Left colon (tissue), 2 donors: ENCODE measurements at regions of chr17 and their contacts with region 1.

Region 1: GRCh38 chr17:40909351-40909750 is 24.3 kb upstream of the KRT20 start:
- DNase-seq: peak; percentile 56 to 78
- ATAC-seq: peak; percentile 78

Region 2: DNA sequence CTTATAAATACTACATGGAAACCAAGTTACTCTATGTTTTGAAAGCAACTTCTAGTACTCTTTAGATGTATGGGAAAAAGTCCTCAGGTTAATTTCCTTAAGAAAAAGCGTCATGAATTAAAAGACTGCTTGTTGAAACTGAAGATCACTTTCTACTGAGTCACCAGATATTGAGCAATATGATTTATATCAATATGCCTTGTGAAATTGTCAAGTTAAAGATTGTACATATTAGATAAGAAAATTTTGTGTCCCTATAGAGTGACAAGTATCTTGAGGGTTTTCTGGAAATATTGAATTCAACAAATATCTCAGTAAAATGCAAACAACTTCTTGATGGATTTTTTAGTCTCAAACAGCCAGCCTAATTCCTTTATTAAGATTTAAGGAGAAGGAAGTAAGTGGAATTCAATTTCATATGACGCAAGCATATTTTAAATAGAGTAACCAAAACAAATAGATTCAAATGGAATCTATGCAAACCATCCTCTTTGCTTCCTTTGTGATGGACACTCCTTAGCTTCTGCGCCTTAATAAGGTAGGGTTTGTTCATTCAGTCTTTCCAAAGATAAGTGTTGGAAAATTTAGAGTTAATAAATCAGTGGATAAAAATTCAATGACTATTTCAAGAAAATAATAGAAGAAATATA is 58.9 kb before region 1 on chr17:
- intact Hi-C with region 1: no loop called
- DNase-seq: no peak
- ATAC-seq: no peak

Region 3: DNA sequence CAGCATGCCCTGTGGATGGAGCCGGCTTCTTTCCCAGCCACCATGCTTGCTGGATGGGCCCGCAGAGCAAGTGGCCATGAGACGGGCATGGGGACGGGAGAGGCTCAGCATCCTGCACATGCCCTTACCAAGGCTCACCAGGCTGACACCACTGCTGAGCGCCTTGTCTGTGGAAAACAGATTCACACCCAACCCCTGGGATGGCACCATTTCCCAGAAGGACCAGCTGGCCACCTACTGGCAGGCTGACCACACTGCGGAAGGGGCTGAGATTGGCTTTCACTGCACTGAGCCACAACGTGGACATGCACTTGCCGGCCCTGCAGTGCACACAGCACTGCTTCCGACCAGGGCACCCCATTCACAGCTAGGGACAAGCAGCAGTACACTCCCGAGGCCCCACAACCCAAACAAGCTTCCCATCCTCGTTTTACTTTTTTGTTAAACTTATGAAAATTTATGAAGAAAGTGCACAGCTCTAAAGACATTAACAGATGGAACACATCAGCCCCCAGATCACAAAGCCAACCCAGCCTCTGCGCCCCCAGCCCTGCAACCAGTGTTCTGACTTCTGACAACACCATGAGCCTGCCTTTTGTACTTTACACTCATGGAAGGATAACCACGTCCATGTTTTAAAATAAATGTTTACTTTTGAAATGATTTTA is 420.1 kb after region 1 on chr17:
- intact Hi-C with region 1: loop called in 1 of 2 experiments (anchors 5 kb)
- DNase-seq: peak in 1 of 2 donors; percentile 59
- ATAC-seq: peak; percentile 90

Region 4: DNA sequence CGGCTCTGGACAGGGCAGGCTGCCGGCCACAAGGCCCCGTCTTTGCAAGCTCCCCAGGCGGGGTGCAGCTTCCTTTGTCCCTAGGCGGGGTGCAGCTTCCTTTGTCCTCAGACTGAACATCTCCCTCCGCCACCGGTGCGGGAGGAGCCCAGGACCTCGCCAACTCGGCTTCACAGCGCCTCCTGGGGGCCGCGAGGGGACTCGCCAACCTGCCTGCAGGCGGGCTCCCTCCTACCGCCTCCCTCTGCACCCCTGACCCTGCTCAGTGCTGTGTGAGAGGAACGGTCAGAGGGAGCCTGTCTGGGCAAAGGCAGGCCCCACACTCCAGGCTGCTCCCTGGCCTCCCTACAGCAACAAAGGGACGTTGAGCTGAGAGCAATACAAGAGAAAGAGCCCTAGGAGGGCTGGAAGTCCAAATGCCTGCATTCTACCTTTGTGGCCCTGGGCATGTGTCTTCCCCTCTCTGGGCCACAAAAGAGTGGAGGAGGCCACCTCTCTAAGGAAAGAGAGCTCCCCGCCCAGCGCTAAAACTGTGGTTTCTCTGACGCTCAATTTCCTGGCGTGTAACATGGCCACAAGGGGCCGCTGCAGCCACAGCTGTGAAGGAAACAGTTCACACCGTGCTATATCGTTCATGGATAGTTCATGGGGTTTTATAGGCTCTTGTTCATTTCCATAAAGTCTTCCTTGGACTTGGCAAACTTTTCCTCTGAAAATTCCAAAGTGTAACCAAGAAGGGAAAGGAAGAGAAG is 639.7 kb after region 1 on chr17:
- intact Hi-C with region 1: loop called in 1 of 2 experiments (anchors 10 kb)
- DNase-seq: peak; percentile 87 to 94
- ATAC-seq: peak; percentile 69

Region 5: DNA sequence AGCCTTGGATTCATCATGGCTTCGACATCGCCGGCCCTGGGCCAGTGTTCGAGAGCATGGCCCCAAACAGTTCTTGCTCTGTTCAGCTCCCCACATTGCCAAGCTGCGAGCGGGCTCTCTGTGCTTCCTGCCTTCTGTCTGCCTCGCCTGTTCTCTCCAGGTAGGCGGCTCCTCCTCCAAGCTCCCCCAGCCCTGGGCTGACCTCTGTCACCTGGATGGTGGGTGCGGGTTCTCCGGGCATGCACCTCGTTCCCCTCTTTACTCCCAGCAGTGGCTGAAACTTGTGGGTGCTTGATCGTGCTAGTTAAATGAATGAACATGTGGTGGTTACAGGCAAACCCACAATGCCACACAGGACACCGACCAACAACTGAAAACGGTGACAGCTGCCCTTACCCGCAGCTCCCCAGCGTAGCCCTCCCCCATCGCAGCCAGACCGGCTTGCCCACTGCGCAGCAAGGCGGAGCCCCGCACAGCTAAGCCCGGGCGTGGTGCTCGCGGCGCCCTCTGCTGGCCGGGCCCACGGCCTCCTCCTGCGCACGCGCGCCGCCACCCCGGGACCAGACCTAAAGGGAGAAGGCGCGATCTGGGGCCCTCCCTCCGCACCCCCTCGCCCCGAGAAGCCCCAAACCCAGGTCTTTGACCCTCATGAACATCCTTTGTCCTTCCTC is 756.4 kb after region 1 on chr17:
- intact Hi-C with region 1: loop called in 1 of 2 experiments (anchors 10 kb)
- DNase-seq: peak; percentile 89 to 93
- ATAC-seq: peak; percentile 87